ENCODE measurements at regions of chr2 and their contacts with region 1.

Region 1: DNA sequence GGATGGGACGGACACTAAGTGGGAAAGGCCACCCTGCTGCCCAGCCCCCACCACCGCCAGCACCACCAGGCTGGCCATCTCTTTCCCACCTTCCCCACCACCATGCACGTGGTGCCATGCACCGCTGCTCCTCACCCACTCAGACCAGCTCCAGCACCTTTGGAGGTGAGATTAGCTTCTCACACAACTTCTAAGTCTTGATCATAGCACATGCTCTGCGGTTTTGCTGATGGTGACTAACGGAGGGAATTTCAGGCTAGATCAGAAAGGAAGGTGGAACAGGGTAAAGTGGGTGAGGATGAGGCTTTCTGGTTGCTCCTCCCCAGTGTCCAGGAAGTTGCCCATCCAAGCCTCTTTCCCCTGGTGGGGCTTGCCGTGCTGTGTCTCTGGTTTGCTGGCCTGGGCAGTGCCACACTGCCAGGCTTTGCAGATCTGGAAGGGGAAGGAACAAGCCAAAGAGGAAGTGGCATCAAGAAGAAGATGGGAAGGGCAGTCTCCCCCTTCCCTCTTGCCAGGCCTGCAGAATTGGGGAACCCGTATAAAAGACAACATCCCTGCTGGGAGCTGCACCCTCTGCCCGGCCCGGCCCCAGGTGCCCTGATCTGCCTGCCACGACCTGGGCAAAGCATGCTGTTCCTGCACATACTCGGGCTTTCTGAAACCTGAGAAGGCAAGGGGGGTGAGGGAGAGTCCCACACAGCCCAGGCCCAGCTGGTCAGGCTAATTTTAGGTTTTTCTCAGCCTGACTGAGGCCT is 44.3 kb upstream of the CAB39 start:
- DNase-seq: no peak
- H3K4me3 Mint-ChIP-seq: no peak overlapping the region
- H3K27ac Mint-ChIP-seq: peak overlapping the region; percentile 74
- H3K4me1 Mint-ChIP-seq: peaks cover 76% of the 10 kb centered on the region
- H3K27me3 Mint-ChIP-seq: no peaks in the 10 kb centered on the region

Region 2: DNA sequence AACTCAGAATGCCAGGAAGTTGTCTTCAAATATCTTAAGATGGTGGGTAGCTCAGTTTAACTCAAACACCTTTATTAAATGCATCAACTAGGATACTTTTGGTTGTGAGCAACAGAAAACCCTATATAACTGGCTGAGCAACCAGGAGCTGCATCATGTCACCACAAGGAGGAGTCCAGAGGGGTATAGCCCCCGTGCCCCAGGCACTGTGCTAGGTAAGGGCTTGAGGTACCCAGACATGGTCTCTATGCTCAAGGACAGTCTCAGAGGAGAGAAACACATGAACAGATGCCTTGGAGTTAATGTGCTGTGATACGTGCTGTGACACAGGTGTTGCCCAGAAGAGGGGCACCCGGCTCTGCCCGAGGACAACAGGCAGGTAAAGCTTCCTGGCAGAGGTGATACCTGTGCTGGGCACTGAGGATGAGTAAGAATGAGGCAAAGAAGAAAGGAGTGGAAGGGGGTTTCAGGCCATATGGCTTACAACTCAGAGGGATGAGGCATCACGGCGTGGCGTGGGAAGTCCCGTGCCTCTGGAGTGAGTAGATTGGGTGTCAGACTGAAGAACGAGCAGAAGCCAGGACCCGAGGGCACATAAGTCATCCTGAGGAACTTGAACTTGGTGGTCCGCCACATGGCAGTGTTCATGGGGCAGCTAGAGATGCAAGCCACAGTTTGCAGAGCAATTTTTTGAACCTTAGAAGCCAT is 12.3 kb after region 1 on chr2:
- CTCF ChIA-PET with region 1: interaction called, 16 read pairs
- POLR2A ChIA-PET with region 1: interaction called, 5 read pairs
- DNase-seq: no peak
- H3K4me3 Mint-ChIP-seq: no peak overlapping the region
- H3K27ac Mint-ChIP-seq: peak overlapping the region; percentile 59
- H3K4me1 Mint-ChIP-seq: peaks cover 52% of the 10 kb centered on the region
- H3K27me3 Mint-ChIP-seq: no peaks in the 10 kb centered on the region

Region 3: GRCh38 chr2:230712443-230713330 is 44.3 kb after region 1 on chr2 and contains the start of gene CAB39:
- CTCF ChIA-PET with region 1: interaction called, 11 read pairs
- POLR2A ChIA-PET with region 1: no interaction called
- DNase-seq: peak; percentile 86
- H3K4me3 Mint-ChIP-seq: peak within 1 kb of the TSS; percentile 97
- H3K27ac Mint-ChIP-seq: peak within 1 kb of the TSS; percentile 97
- H3K4me1 Mint-ChIP-seq: peaks cover 48% of the 10 kb centered on the region
- H3K27me3 Mint-ChIP-seq: no peaks in the 10 kb centered on the region
- total RNA-seq, gene CAB39: 135 to 154 TPM

Region 4: DNA sequence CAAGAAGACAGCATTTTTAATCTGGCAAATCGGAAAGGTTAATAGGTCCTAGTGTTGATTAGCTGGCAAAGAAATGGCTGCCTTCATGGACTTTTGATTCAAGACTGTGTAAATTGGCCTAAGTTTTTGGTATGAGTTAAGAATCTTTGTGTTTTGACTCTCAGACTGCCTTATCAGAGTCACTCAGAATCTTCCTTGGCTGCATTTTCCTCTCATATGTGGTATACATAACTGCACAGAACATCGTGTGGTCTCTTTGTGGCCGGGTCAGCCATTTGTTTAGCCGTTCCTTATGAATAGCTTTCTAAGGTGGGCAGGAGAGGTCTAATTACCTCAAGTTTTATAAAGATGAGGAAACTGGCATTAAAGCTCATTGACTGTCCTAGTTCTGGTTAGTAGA is 74.4 kb after region 1 on chr2:
- CTCF ChIA-PET with region 1: no interaction called
- POLR2A ChIA-PET with region 1: no interaction called
- DNase-seq: no peak
- H3K4me3 Mint-ChIP-seq: no peak overlapping the region
- H3K27ac Mint-ChIP-seq: no peak overlapping the region
- H3K4me1 Mint-ChIP-seq: peaks cover 40% of the 10 kb centered on the region
- H3K27me3 Mint-ChIP-seq: no peaks in the 10 kb centered on the region

Measured in activated CD4-positive, alpha-beta T cell treated with anti-CD3 and anti-CD28 coated beads, Interleukin-2, amount 10 ng/mL, durations not matched to agents 7 days and 5 days (primary cell).